Tibial artery (tissue), 4 donors: ENCODE measurements at regions of chr17 and their contacts with region 1.

Region 1: DNA sequence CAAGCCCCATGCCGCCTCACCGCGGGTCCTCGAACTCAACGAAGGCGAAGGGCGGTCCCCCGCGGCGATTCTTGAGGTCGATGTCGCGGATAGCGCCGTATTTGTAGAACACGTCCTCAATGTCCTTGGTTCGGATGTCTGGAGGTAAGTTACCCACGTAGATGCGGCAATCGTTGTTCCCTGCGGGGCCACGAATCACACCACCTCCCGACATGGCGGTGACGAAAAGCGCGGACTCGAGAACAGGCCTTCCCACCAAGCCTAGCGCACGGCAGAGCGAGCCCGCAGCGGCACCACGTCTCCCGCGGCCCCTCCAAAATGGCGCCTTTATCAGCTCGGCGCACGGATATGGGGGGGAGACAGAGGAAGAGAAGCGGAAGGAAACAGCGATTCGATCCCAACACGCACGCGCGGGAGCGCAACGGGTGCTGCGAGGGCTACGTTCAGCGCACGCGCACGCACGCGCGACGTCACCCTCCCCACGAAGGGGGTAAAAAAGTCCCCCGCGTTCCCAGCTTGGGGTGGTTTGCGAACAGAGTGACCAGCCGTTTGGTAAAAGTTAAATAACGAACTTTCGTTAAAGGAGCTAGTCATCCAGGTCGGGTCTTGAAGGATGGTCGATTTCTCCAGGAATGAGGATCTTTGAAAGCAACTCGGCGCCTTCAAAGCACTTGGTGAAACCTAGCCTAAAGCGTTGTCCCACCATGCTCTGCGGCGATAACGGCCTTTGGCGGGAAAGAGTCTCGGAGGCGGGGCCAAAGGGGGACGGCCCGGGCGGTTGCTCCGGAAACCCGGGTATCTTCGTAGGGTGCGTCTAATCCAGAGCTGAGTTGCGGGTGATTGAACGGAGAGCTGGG is at the start of gene SRSF1:
- DNase-seq: peak; percentile 96 to 98
- H3K4me3 ChIP-seq: peak within 1 kb of the TSS; percentile 87 to 90
- H3K27ac ChIP-seq: peak within 1 kb of the TSS; percentile 97 to 98
- H3K4me1 ChIP-seq: peaks cover 0 to 44% (median 25%) of the 10 kb centered on the region in 4 donors
- H3K27me3 ChIP-seq: no peaks in the 10 kb centered on the region
- CTCF ChIP-seq: no peak

Region 2: GRCh38 chr17:57255776-57256681 is 751.1 kb before region 1 on chr17 and contains the start of gene MSI2:
- intact Hi-C with region 1: loop called (anchors 10 kb)
- DNase-seq: peak; percentile 95 to 96
- H3K4me3 ChIP-seq: peak within 1 kb of the TSS; percentile 81 to 92
- H3K27ac ChIP-seq: peak within 1 kb of the TSS; percentile 93 to 98
- H3K4me1 ChIP-seq: peaks cover 0 to 21% (median 14%) of the 10 kb centered on the region in 4 donors
- H3K27me3 ChIP-seq: no peaks in the 10 kb centered on the region
- CTCF ChIP-seq: no peak

Region 3: DNA sequence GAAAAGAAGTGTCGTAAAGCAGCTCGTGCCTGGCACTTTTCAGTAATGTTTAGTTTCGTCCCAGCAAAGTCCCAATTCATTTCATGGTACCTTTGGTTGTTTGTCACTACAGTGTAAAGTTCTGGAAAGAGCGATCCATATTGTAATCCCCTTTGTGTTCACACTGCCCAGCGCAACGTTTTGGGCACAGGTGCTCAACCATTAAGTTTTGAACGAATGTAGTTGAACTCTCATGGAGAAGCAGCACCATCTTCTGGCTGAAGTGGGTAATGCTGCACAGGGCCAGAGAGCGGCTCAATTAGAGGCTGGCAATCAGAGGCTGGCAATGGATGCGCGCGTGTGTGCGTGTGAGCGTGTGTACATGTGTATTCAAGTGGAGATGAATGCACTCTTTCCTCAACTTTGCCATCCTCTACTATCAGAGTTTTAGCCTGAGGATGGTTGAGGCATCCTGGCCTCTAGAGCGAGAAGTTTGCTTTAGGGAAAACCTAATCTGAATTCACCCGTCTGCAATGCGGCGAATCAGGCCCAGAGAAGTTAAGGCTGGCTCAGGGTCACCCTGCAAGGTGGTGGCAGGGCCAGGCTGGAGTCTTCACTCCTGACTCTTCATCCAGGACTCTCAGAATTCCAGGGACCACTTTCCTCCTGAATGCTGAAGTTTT is 105.9 kb after region 1 on chr17:
- intact Hi-C with region 1: loop called (anchors 10 kb)
- DNase-seq: peak; percentile 79 to 82
- H3K4me3 ChIP-seq: no peak overlapping the region
- H3K27ac ChIP-seq: no peak overlapping the region
- H3K4me1 ChIP-seq: no peaks in the 10 kb centered on the region
- H3K27me3 ChIP-seq: peaks cover 0 to 12% of the 10 kb centered on the region in 2 donors
- CTCF ChIP-seq: peak; percentile 91 to 93